Spleen (tissue), 13 donors: ENCODE measurements at regions of chrX and their contacts with region 1.

Region 1: GRCh38 chrX:119516157-119516702 is 48.0 kb downstream of the SLC25A5 start:
- DNase-seq: no peak
- H3K4me3 ChIP-seq: no peak overlapping the region
- H3K27ac ChIP-seq: no peak overlapping the region
- H3K4me1 ChIP-seq: peaks cover 0 to 5% (median 0%) of the 10 kb centered on the region in 6 donors
- H3K27me3 ChIP-seq: no peaks in the 10 kb centered on the region
- CTCF ChIP-seq: peak; percentile 70 to 90 (median 83)
- POLR2A ChIP-seq: no peak

Region 2: DNA sequence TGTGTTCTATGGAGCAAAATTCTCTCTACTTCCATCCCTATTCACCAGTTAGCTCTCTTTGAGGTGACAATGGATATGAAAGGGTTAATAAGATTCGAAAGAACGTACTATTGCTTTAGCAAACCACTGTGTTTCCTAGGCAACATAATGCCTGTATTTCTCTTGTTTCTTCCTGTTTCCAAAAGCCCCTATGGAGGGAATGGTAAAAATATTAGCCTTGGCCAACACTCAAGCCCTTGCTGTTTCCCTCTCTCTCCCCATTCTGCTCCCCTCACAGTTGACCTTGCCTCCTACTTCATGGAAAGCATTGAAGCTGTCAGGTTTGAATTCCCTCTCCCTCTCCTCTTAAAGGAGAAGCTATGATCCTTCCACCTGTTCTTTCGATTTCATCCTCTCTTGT is 289.8 kb before region 1 on chrX:
- intact Hi-C with region 1: no loop called
- DNase-seq: no peak
- H3K4me3 ChIP-seq: no peak overlapping the region
- H3K27ac ChIP-seq: no peak overlapping the region
- H3K4me1 ChIP-seq: no peaks in the 10 kb centered on the region
- H3K27me3 ChIP-seq: peaks cover 0 to 8% (median 0%) of the 10 kb centered on the region in 7 donors
- CTCF ChIP-seq: no peak
- POLR2A ChIP-seq: no peak

Region 3: GRCh38 chrX:119729408-119730201 is 213.4 kb after region 1 on chrX:
- intact Hi-C with region 1: loop called (anchors 5 kb)
- DNase-seq: peak; percentile 76
- H3K4me3 ChIP-seq: peak overlapping the region in 1 of 8 donors; percentile 21
- H3K27ac ChIP-seq: no peak overlapping the region
- H3K4me1 ChIP-seq: peaks cover 0 to 10% (median 3%) of the 10 kb centered on the region in 6 donors
- H3K27me3 ChIP-seq: no peaks in the 10 kb centered on the region
- CTCF ChIP-seq: peak; percentile 24 to 76 (median 68)
- POLR2A ChIP-seq: no peak